GM18951 (cell line): ENCODE measurements at regions of chr11 and their contacts with region 1.

Region 1: GRCh38 chr11:112795142-112795815 is 165.9 kb upstream of the NCAM1 start:
- POLR2A ChIP-seq: no peak

Region 2: GRCh38 chr11:112588252-112588694 is 207.0 kb before region 1 on chr11:
- in situ Hi-C with region 1: loop called (anchors 25 kb)
- POLR2A ChIP-seq: no peak

Region 3: DNA sequence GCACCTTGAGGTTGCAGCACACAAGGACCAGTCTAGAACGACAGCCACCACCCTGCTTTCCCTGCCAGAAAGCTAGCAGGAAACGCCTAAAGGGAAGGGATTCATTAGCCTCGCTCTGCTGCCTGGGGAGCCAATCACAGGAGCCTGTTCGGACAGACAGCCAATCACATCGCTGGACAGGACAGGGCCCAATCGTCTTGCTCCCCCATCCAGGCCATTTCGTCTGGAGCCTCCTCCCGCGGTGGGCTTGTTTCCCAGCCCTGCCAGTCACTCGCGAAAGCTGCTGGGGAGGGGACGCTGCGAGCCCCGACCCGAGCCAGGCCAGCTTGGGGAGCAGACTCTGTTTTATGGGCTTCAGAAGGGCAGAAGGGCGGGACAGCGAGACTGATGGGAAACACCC is 86.2 kb after region 1 on chr11:
- in situ Hi-C with region 1: no loop called
- POLR2A ChIP-seq: no peak